Kidney (tissue), 22 donors: ENCODE measurements at regions of chr4 and their contacts with region 1.

Region 1: GRCh38 chr4:109702950-109703663 is at the start of gene CASP6:
- DNase-seq: peak; percentile 86 to 95 (median 91)
- H3K4me3 ChIP-seq: peak within 1 kb of the TSS; percentile 75 to 79 (median 75)
- H3K27ac ChIP-seq: peak within 1 kb of the TSS; percentile 78 to 83
- H3K4me1 ChIP-seq: peaks cover 0 to 14% (median 8%) of the 10 kb centered on the region in 3 donors
- H3K27me3 ChIP-seq: no peaks in the 10 kb centered on the region
- CTCF ChIP-seq: peak; percentile 51
- total RNA-seq, gene CASP6: 21.6 TPM

Region 2: GRCh38 chr4:109389369-109390114 is 313.6 kb before region 1 on chr4:
- intact Hi-C with region 1: no loop called
- DNase-seq: peak in 4 of 5 donors; percentile 38 to 66 (median 53)
- H3K4me3 ChIP-seq: no peak overlapping the region
- H3K27ac ChIP-seq: no peak overlapping the region
- H3K4me1 ChIP-seq: peaks cover 0 to 4% (median 3%) of the 10 kb centered on the region in 3 donors
- H3K27me3 ChIP-seq: no peaks in the 10 kb centered on the region
- CTCF ChIP-seq: no peak

Region 3: DNA sequence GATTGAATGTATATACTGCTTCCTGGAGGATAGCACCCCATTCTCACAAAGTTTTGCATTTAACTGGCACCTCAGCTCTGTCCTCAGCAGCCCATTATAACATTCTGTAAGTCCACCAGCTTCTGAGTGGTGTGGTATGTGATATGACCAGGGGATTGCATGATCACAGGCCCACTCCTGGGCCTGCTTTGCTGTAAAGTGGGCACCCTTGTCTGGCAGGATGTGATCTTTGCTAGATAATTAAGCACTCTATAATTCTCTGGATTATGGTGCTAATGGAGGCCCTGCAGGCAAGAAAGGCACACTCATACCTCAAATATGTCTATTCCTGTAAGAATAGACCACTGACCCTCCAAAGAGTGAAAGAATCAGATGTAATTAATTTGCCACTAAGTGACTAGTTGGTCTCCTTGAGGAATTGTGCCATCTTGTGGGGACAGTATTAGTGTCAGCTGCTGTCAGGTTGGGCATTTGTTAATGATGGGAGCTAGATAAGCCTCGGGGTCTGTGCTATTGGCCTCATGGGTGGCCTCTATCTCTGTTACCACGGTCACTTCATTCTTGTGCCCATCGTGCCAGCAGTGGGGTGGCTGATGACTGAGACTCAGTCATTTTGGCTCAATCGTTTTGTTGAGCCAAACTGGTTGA is 100.9 kb after region 1 on chr4:
- intact Hi-C with region 1: loop called (anchors 10 kb)
- DNase-seq: peak in 3 of 5 donors; percentile 31 to 74 (median 63)
- H3K4me3 ChIP-seq: no peak overlapping the region
- H3K27ac ChIP-seq: no peak overlapping the region
- H3K4me1 ChIP-seq: peaks cover 0 to 8% (median 7%) of the 10 kb centered on the region in 3 donors
- H3K27me3 ChIP-seq: no peaks in the 10 kb centered on the region
- CTCF ChIP-seq: peak; percentile 47